Activated B cell treated with CpG ODN at 0.5 μM for 24 hours (primary cell): ENCODE measurements at regions of chr22 and their contacts with region 1.

Region 1: DNA sequence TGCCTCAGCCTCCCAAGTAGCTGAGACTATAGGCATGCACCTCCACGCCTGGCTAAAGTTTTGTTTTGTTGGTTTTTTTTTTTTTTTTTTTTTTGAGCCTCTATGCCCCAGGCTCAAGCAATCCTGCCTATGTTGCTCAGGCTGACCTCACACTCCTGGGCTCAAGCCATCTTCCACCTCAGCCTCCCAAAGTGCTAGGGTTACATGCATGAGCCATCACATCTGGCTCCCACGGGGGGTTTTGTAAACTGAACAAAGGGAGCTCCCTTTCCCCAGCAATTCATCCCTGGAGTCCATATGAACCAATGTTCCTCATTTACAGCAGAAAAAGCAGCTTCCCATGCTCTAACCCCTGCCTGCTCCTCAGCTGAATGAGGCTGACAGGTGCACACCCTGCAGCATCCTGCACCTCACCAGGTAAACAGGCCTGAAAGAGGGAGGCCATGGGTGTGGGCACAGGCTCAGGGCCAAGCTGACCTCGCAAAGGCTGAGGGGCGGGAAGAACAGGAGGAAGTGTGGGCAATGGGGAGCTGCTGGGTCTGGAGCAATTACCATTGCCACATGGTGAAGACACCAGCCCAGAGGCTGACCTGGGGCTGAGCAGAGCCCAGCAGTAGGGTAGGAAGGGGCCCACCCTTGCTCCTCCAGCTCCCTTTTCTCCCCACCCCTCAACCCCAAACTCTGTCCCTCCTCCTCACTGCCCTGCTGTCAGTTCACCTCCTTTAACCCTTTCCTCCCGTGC is 58.2 kb downstream of the RBX1 start:
- DNase-seq: no peak
- ATAC-seq: no peak
- H3K4me3 Mint-ChIP-seq: no peak overlapping the region
- H3K27ac Mint-ChIP-seq: no peak overlapping the region
- H3K4me1 Mint-ChIP-seq: no peaks in the 10 kb centered on the region
- H3K27me3 Mint-ChIP-seq: no peaks in the 10 kb centered on the region
- CTCF ChIP-seq: no peak

Region 2: DNA sequence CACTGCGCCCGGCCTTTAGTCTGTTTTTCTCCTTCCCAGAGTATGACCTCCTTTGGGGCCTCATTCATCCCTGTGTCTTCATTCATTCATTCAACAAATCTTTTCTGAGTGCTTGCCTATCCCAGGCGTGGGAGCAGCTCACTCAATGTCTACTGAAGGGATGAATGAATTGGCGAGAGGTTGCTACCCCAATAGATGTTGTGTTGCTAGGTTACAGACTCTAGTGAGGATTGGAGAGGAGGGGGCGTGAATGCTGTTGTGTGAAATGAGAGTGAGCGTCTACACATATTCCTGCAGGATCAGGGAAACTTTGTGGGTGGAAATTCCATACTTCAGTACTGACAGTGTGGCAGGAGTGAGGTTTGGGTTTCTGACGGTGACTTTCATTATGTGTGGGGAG is 27.6 kb after region 1 on chr22:
- CTCF ChIA-PET with region 1: no interaction called
- POLR2A ChIA-PET with region 1: interaction called, 12 read pairs
- intact Hi-C with region 1: no loop called
- DNase-seq: no peak
- ATAC-seq: no peak
- H3K4me3 Mint-ChIP-seq: no peak overlapping the region
- H3K27ac Mint-ChIP-seq: no peak overlapping the region
- H3K4me1 Mint-ChIP-seq: no peaks in the 10 kb centered on the region
- H3K27me3 Mint-ChIP-seq: peaks cover 2% of the 10 kb centered on the region
- CTCF ChIP-seq: no peak

Region 3: GRCh38 chr22:41127451-41127850 is 118.1 kb after region 1 on chr22:
- CTCF ChIA-PET with region 1: no interaction called
- POLR2A ChIA-PET with region 1: no interaction called
- intact Hi-C with region 1: no loop called
- DNase-seq: no peak
- ATAC-seq: no peak
- H3K4me3 Mint-ChIP-seq: no peak overlapping the region
- H3K27ac Mint-ChIP-seq: no peak overlapping the region
- H3K4me1 Mint-ChIP-seq: peaks cover 13% of the 10 kb centered on the region
- H3K27me3 Mint-ChIP-seq: no peaks in the 10 kb centered on the region
- CTCF ChIP-seq: no peak

Region 4: DNA sequence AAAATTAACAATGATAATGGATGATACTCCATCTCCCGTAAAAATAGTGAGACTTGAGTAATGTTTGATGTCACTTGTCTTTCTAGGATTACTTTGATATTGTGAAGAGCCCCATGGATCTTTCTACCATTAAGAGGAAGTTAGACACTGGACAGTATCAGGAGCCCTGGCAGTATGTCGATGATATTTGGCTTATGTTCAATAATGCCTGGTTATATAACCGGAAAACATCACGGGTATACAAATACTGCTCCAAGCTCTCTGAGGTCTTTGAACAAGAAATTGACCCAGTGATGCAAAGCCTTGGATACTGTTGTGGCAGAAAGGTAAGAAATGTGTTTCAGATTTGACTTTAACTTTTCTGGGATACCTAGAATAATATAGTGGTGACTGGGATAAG is 147.7 kb after region 1 on chr22:
- CTCF ChIA-PET with region 1: no interaction called
- POLR2A ChIA-PET with region 1: no interaction called
- intact Hi-C with region 1: no loop called
- DNase-seq: no peak
- ATAC-seq: no peak
- H3K4me3 Mint-ChIP-seq: no peak overlapping the region
- H3K27ac Mint-ChIP-seq: no peak overlapping the region
- H3K4me1 Mint-ChIP-seq: no peaks in the 10 kb centered on the region
- H3K27me3 Mint-ChIP-seq: no peaks in the 10 kb centered on the region
- CTCF ChIP-seq: no peak